ENCODE measurements at regions of chr4 and their contacts with region 1.

Region 1: GRCh38 chr4:184845367-184846021 is 19.7 kb upstream of the ACSL1 start:
- DNase-seq: peak; percentile 84
- H3K4me3 Mint-ChIP-seq: no peak overlapping the region
- H3K27ac Mint-ChIP-seq: peak overlapping the region; percentile 69
- H3K4me1 Mint-ChIP-seq: peaks cover 13% of the 10 kb centered on the region
- H3K27me3 Mint-ChIP-seq: no peaks in the 10 kb centered on the region
- CTCF ChIP-seq: no peak

Region 2: GRCh38 chr4:184616633-184617551 is 228.6 kb before region 1 on chr4:
- CTCF ChIA-PET with region 1: no interaction called
- POLR2A ChIA-PET with region 1: no interaction called
- intact Hi-C with region 1: no loop called
- DNase-seq: no peak
- H3K4me3 Mint-ChIP-seq: no peak overlapping the region
- H3K27ac Mint-ChIP-seq: no peak overlapping the region
- H3K4me1 Mint-ChIP-seq: no peaks in the 10 kb centered on the region
- H3K27me3 Mint-ChIP-seq: no peaks in the 10 kb centered on the region
- CTCF ChIP-seq: no peak

Region 3: GRCh38 chr4:184825896-184826690 is 19.4 kb before region 1 on chr4 and contains the start of gene ACSL1:
- CTCF ChIA-PET with region 1: no interaction called
- POLR2A ChIA-PET with region 1: interaction called, 15 read pairs
- intact Hi-C with region 1: no loop called
- DNase-seq: peak; percentile 65
- H3K4me3 Mint-ChIP-seq: peak within 1 kb of the TSS; percentile 87
- H3K27ac Mint-ChIP-seq: peak within 1 kb of the TSS; percentile 50
- H3K4me1 Mint-ChIP-seq: peaks cover 23% of the 10 kb centered on the region
- H3K27me3 Mint-ChIP-seq: no peaks in the 10 kb centered on the region
- CTCF ChIP-seq: no peak
- total RNA-seq, gene ACSL1: 99.5 and 105 TPM in 2 replicates

Measured in MCF 10A (cell line).